Activated CD8-positive, alpha-beta T cell treated with anti-CD3 and anti-CD28 coated beads for 36 hours (primary cell): ENCODE measurements at regions of chr21 and their contacts with region 1.

Region 1: DNA sequence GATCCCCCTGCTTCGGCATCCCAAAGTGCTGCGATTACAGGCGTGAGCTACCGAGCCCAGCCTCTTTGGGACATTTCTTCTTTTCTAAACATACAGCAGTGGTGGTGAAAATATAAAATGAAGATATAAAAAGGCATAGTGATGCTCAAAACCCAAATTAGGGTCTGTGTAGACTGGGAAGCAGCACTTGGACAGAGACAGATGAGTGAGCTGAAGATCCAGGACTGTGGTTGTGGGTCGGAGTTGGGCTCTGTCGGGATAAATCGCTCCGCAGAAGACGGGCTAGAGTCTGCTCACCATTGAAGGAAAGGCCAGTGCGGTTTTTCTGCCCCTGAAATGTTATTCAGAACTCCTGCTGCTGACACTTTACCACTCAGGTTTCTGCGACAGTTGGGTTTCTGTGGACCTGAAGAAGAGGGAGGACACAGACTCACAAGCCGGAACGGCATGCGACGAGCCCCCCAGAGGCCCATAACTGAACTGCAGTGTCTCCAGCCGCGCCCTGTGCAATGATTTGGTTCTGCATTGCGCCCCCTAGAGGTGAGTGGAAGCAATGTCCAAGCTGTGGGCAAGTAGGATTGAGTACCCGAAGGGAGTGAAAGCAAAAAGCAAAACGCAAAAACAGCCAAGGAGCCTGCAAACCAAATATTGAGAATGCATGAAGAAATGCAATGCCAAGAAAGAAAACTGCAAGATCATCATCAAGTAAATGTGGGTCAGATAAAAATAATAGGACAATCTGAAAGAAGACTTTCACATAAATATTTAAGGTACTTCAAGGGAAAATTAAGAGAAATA is 66.6 kb downstream of the GABPA start:
- DNase-seq: peak; percentile 94
- ATAC-seq: peak; percentile 100
- H3K4me3 Mint-ChIP-seq: peak overlapping the region; percentile 11
- H3K27ac Mint-ChIP-seq: no peak overlapping the region
- H3K4me1 Mint-ChIP-seq: peaks cover 5% of the 10 kb centered on the region
- H3K27me3 Mint-ChIP-seq: peaks cover 7% of the 10 kb centered on the region
- CTCF ChIP-seq: peak; percentile 97

Region 2: GRCh38 chr21:25750085-25750484 is 51.3 kb before region 1 on chr21:
- CTCF ChIA-PET with region 1: interaction called, 31 read pairs
- POLR2A ChIA-PET with region 1: no interaction called
- intact Hi-C with region 1: no loop called
- DNase-seq: peak; percentile 52
- ATAC-seq: peak; percentile 70
- H3K4me3 Mint-ChIP-seq: no peak overlapping the region
- H3K27ac Mint-ChIP-seq: peak overlapping the region; percentile 75
- H3K4me1 Mint-ChIP-seq: peaks cover 13% of the 10 kb centered on the region
- H3K27me3 Mint-ChIP-seq: no peaks in the 10 kb centered on the region
- CTCF ChIP-seq: no peak

Region 3: DNA sequence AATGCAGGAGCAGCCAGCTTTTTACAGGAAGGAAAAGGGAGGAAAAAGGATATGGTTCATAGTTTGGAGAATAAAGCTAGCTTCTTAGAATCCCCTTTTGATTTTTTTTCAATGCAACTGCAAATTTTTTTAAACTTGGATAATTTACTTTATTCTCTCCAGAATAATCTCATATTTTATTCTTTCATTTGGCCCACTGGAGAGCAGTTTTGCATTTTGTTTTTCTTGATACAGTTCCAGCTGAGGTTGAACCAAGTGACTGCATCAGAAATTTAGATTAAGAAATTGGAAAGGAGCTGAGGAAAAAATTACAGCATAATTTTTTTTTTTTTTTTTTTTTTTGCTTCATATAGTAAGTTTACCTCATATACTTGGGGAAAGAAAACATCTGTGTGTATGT is 43.9 kb before region 1 on chr21:
- CTCF ChIA-PET with region 1: interaction called, 22 read pairs
- POLR2A ChIA-PET with region 1: no interaction called
- intact Hi-C with region 1: no loop called
- DNase-seq: no peak
- ATAC-seq: no peak
- H3K4me3 Mint-ChIP-seq: no peak overlapping the region
- H3K27ac Mint-ChIP-seq: no peak overlapping the region
- H3K4me1 Mint-ChIP-seq: peaks cover 25% of the 10 kb centered on the region
- H3K27me3 Mint-ChIP-seq: no peaks in the 10 kb centered on the region
- CTCF ChIP-seq: no peak

Region 4: DNA sequence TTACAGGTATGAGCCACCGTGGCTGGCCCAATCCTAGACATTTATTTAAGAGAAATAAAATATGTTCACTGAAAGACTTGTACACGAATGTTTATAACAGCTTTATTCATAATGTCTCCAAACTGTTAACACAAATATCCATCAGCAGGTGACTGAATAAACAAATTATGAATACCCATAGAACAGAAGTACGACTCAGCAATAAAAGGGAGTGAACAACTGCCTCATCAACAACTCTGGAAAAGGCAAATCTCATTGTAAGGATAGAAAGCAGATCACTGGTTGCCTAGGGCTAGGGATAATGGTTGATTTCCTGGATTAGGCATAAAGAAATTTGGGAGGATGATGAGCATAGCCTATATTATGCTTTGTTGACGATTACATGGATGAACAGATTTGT is 25.0 kb before region 1 on chr21:
- CTCF ChIA-PET with region 1: interaction called, 14 read pairs
- POLR2A ChIA-PET with region 1: no interaction called
- intact Hi-C with region 1: no loop called
- DNase-seq: no peak
- ATAC-seq: no peak
- H3K4me3 Mint-ChIP-seq: no peak overlapping the region
- H3K27ac Mint-ChIP-seq: no peak overlapping the region
- H3K4me1 Mint-ChIP-seq: peaks cover 10% of the 10 kb centered on the region
- H3K27me3 Mint-ChIP-seq: no peaks in the 10 kb centered on the region
- CTCF ChIP-seq: no peak

Region 5: DNA sequence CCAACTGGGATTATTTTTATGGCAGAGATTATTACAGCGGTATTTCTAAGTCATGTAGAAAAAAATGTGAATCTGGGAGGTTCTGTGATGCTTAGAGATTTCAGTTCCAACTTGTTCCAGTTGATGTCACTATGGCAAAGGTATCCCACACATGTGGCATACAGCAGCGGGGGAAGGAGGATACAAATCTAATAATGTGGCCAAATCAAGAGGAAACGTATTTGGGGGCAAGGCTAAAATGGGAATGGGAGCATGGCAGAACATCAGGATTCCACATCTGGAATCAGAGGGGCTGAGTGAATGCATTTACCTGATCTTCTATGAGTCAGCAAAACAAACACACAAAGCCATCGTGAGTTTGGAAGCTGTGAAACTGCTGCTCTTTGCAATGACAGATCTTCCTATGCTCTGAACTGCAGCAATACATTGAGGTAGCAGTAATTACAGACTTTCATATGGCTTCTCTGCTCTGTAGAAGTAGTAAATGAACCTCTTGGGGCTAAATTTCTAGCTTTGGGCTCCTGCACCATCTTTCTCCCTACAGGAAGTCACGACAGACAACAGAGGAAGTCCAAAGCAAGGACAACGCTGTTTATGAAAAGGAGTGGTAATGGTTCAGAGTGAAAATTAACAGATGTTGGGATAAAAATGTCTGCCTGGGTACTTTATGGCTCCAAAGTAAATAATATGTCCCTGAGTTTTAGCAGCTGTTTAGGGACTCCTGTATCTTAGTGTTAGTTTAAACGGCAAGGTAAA is 11.1 kb before region 1 on chr21:
- CTCF ChIA-PET with region 1: interaction called, 21 read pairs
- POLR2A ChIA-PET with region 1: no interaction called
- intact Hi-C with region 1: no loop called
- DNase-seq: peak; percentile 23
- ATAC-seq: peak; percentile 86
- H3K4me3 Mint-ChIP-seq: peak overlapping the region; percentile 59
- H3K27ac Mint-ChIP-seq: peak overlapping the region; percentile 18
- H3K4me1 Mint-ChIP-seq: peaks cover 8% of the 10 kb centered on the region
- H3K27me3 Mint-ChIP-seq: peaks cover 2% of the 10 kb centered on the region
- CTCF ChIP-seq: peak; percentile 60

Region 6: GRCh38 chr21:25903602-25904001 is 102.2 kb after region 1 on chr21:
- CTCF ChIA-PET with region 1: no interaction called
- POLR2A ChIA-PET with region 1: no interaction called
- intact Hi-C with region 1: no loop called
- DNase-seq: no peak
- ATAC-seq: no peak
- H3K4me3 Mint-ChIP-seq: no peak overlapping the region
- H3K27ac Mint-ChIP-seq: no peak overlapping the region
- H3K4me1 Mint-ChIP-seq: no peaks in the 10 kb centered on the region
- H3K27me3 Mint-ChIP-seq: no peaks in the 10 kb centered on the region
- CTCF ChIP-seq: no peak